K562 (cell line): ENCODE measurements at regions of chr6 and their contacts with region 1.

Region 1: DNA sequence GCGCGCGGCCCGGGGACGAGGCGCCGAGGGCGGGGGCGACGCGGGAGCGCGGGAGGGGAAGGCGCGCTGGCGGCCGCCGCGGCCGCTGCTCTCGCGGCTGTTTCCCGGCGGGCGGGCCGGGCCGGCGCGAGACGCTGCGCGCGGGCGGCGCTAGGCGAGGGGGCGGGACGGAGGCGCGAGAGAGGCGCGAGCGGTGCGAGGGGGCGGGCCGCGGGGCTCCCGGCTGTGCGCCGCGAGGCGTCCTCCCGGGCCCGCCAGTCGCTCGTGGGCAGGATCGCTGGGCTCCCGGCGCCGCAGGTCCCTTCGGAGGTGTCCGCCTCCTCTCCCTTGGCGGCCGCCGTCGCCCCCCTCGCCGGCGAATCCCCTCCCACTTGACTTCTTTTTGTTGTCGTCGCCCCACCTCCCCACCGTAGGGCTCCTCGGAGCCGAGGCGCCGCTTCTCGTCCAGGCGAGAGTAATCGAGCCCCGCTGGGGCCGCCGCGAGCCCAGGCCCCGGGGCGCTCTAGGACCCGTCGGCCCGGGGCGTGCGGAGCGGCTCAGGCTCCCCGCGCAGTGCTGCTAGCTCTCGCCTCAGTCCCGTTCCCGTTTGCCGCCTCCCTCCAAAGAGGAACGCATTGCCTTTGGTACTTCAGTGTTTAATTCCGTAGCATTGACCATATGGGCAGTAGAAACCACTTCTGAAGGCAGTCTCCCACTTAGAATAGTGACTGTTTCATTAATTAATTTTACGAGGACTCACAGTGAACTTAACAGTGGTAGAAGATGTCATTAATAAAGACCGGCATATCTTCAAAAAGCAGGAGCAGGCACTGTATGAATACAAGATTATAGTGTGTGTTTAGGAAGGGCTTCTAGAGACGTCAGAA is at the start of gene RANBP9:
- DNase-seq: peak; percentile 92 to 93 (median 93)
- ATAC-seq: peak; percentile 85
- H3K4me3 ChIP-seq: peak within 1 kb of the TSS; percentile 84
- H3K27ac ChIP-seq: peak within 1 kb of the TSS; percentile 93
- H3K4me1 ChIP-seq: peaks cover 14 to 16% of the 10 kb centered on the region in 2 experiments; a peak in 4 of 5 replicates
- H3K27me3 ChIP-seq: no peaks in the 10 kb centered on the region
- CTCF ChIP-seq: peak in 1 of 3 experiments; percentile 21; a peak in 1 of 6 replicates
- EP300 ChIP-seq: no peak
- POLR2A ChIP-seq: peak; percentile 82
- RAD21 ChIP-seq: peak; percentile 26 to 31; a peak in 3 of 4 replicates
- polyA plus RNA-seq, gene RANBP9: 27.5 to 31.2 TPM

Region 2: GRCh38 chr6:13678255-13678983 is 33.5 kb before region 1 on chr6:
- CTCF ChIA-PET with region 1: no interaction called
- POLR2A ChIA-PET with region 1: interaction called, 4 read pairs
- in situ Hi-C with region 1: no loop called
- intact Hi-C with region 1: loop called (anchors 2 kb)
- DNase-seq: peak; percentile 78 to 96 (median 88)
- ATAC-seq: peak; percentile 75
- H3K4me3 ChIP-seq: peak overlapping the region; percentile 42
- H3K27ac ChIP-seq: peak overlapping the region; percentile 81
- H3K4me1 ChIP-seq: peaks cover 13 to 28% of the 10 kb centered on the region in 2 experiments
- H3K27me3 ChIP-seq: no peaks in the 10 kb centered on the region
- CTCF ChIP-seq: no peak
- EP300 ChIP-seq: peak; percentile 98
- POLR2A ChIP-seq: peak; percentile 97
- RAD21 ChIP-seq: no peak; a peak in 1 of 4 replicates

Region 3: DNA sequence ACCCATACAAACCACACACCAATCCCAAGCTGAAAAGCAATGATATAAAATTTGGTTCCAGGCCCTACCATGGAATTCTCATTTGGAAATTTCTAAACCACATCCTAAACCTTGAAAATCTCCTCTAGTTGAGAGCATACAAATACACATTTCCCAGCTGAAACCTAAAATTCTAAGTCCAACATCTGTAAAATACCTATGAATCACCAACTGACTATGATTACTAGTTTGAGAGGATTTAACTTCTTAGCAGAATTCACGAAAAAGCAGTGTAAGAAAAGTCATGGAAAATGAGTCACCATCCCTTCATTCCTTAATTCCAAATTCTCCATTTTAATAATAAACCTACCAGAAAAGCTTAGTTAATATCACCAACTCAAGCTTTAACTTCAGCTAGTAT is 15.7 kb before region 1 on chr6:
- CTCF ChIA-PET with region 1: no interaction called
- POLR2A ChIA-PET with region 1: interaction called, 31 read pairs
- in situ Hi-C with region 1: no loop called
- intact Hi-C with region 1: no loop called
- DNase-seq: no peak
- ATAC-seq: no peak
- H3K4me3 ChIP-seq: no peak overlapping the region
- H3K27ac ChIP-seq: no peak overlapping the region
- H3K4me1 ChIP-seq: peaks cover 0 to 38% of the 10 kb centered on the region in 2 experiments; a peak in 2 of 5 replicates
- H3K27me3 ChIP-seq: no peaks in the 10 kb centered on the region
- CTCF ChIP-seq: no peak
- EP300 ChIP-seq: no peak
- POLR2A ChIP-seq: no peak
- RAD21 ChIP-seq: no peak

Region 4: GRCh38 chr6:13742961-13743735 is 31.2 kb after region 1 on chr6:
- CTCF ChIA-PET with region 1: no interaction called
- POLR2A ChIA-PET with region 1: no interaction called
- in situ Hi-C with region 1: no loop called
- intact Hi-C with region 1: no loop called
- DNase-seq: no peak
- ATAC-seq: no peak
- H3K4me3 ChIP-seq: no peak overlapping the region
- H3K27ac ChIP-seq: no peak overlapping the region
- H3K4me1 ChIP-seq: peaks cover 0 to 5% of the 10 kb centered on the region in 2 experiments; a peak in 1 of 5 replicates
- H3K27me3 ChIP-seq: no peaks in the 10 kb centered on the region
- CTCF ChIP-seq: no peak
- EP300 ChIP-seq: no peak
- POLR2A ChIP-seq: no peak
- RAD21 ChIP-seq: no peak